Posterior cingulate gyrus (tissue), 11 donors: ENCODE measurements at regions of chr11 and their contacts with region 1.

Region 1: DNA sequence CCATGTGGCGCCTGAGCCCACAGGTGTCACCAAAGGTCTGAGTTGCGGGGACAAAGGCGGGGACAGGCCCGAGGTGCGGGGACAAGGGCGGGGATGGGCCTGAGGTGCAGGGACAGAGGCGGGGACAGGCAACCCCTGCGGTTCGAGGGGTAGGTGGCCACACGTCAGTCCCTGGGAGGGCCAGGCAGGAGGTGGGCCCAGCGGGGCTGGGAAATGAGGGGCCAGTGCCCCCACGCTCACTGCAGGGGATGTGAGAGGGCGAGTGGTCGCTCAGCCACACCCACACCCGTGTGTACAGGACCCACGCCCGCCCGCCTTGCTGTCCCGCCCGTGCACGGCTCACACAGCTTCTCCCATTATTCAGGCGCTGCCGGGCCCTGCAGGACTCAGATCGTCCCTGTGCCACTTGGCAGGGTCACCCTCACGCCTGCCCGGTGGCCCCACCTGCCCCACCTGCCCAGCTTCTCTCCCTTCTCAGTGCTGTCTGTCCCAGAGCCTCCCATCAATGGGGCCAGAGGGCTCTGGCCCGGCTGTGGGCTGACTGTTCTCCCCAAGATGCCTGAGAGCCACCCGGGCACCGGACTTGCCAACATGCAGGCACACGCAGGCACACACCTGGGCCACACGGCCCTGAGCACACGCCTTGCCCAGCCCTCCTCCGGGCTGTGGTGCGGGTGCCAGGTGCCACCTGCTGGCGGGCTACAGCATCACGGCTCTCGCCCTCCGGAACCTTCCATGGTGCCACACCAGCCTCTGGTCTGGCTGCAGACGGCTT is 14.2 kb upstream of the MUC6 start:
- DNase-seq: peak; percentile 47 to 96 (median 70)

Region 2: GRCh38 chr11:848380-848931 is 202.3 kb before region 1 on chr11:
- intact Hi-C with region 1: loop called (anchors 1 kb)
- DNase-seq: peak in 5 of 10 donors; percentile 43 to 92 (median 58)